ENCODE measurements at regions of chr9 and their contacts with region 1.

Region 1: DNA sequence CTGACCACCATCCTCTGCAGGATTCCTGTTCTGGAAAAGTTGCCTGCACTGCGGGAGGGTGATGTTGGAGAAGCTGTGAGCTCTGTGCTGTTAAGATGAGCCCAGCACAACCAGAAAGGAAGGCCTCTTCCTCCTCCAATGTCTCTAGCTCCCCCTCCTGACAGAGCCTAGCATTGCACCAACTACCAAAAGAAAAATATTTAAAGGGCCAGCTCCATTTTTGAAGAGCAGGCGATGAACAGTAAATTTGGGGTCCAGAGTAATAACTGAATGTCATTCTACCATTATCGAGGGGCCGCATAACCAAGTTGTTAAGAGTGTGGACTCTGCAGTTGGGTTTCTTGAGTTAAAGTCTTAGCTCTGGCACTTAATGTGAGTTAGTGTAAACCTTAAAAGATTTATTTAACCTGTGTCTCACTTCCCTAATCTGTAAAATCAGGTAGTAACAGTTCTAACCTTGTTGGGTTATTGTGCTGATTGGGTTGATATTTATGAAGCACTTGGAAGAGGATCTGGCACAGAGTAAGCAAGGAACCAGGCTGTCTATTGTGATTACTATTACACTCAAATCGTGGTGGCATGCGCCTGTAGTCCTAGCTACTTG is 3.9 kb downstream of the TEX53 start:
- DNase-seq: peak in 2 of 3 donors; percentile 61 to 74
- ATAC-seq: peak; percentile 65 to 84
- H3K4me3 ChIP-seq: no peak overlapping the region
- H3K27ac ChIP-seq: no peak overlapping the region
- H3K4me1 ChIP-seq: no peaks in the 10 kb centered on the region
- H3K27me3 ChIP-seq: no peaks in the 10 kb centered on the region

Region 2: DNA sequence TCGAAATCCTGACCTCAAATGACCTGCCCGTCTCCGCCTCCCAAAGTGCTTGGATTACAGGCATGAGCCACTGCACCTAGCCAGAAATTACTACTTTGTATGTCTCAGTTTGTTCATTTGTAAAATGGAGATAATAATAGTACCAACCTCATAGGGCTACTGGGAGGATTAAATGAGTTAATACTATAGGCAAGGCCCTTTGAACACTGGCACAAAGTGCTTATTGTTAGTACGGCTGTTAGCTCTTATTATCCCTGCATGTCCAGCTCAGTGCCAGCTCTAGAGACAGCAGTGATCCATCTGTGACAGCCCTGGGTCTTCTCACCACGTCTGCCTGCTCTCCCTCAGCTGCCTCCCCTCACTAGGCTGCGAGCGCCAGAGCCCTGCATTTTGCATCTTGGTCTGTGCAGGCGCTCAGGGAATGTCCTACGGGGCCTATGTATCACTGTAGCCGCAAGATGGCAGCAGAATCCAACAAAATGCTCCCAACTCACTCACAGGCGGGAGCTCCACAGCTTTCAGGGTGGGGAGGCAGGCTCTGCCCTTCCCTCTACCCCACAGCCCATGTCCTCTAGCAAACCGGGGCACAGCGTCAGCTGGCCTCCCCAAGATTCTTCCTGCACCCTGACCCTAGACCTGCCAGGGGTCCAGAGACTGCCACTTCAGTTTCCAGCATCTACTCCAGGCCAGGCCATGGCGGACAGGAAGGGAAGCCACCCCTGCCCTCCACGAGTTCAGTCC is 248.2 kb before region 1 on chr9:
- intact Hi-C with region 1: loop called (anchors 2 to 10 kb)
- DNase-seq: peak; percentile 81 to 86 (median 81)
- ATAC-seq: peak; percentile 87 to 91
- H3K4me3 ChIP-seq: no peak overlapping the region
- H3K27ac ChIP-seq: no peak overlapping the region
- H3K4me1 ChIP-seq: no peaks in the 10 kb centered on the region
- H3K27me3 ChIP-seq: no peaks in the 10 kb centered on the region

Region 3: DNA sequence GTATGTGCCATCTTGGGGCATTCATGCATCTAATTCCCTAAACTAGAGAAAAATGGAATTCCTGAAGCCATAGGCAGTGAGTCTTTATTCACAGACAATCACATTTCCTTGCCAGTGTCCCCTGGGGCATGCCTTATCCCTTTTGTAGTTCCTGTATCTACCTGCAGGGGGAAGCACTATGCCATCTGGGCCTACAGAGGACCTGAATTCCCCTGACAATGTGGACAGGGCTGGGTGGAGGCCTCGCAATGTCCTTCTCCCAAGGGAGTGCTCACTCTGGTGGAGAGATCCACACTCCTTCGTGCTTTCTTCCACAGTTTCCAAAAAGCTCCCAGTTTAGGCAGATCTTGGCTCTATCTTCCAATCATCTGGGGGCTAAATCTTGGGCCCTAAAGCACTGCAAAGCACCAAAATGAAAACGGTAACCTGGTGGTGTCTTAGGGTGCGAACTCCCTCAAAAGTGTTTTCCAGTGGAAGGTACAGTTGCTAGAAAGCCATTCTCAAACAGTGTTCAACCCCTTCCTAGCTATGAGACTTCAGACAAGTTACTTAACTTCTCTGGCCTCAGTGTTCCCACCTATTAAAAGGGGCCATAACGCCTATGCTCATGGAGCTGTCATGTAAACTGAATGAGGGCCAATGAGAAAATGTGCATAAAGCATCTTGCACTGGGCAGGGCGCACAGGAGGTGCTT is 165.9 kb before region 1 on chr9:
- intact Hi-C with region 1: loop called in 3 of 4 experiments (anchors 5 to 10 kb)
- DNase-seq: peak in 1 of 3 donors; percentile 25
- ATAC-seq: peak; percentile 69 to 88
- H3K4me3 ChIP-seq: no peak overlapping the region
- H3K27ac ChIP-seq: no peak overlapping the region
- H3K4me1 ChIP-seq: no peaks in the 10 kb centered on the region
- H3K27me3 ChIP-seq: no peaks in the 10 kb centered on the region